CD8-positive, alpha-beta T cell (primary cell): ENCODE measurements at regions of chr1 and their contacts with region 1.

Region 1: GRCh38 chr1:248873409-248873992 is 14.6 kb upstream of the ZNF692 start:
- DNase-seq: peak; percentile 88 to 95 (median 92)
- ATAC-seq: peak; percentile 77
- H3K4me3 ChIP-seq: peak overlapping the region; percentile 78 to 87
- H3K4me3 Mint-ChIP-seq: peak overlapping the region; percentile 98
- H3K27ac ChIP-seq: peak overlapping the region; percentile 74 to 85
- H3K27ac Mint-ChIP-seq: peak overlapping the region; percentile 98
- H3K4me1 ChIP-seq: peaks cover 8% of the 10 kb centered on the region
- H3K4me1 Mint-ChIP-seq: peaks cover 24% of the 10 kb centered on the region
- H3K27me3 ChIP-seq: no peaks in the 10 kb centered on the region
- H3K27me3 Mint-ChIP-seq: no peaks in the 10 kb centered on the region
- CTCF ChIP-seq: no peak

Region 2: GRCh38 chr1:248807067-248807737 is 66.3 kb before region 1 on chr1:
- CTCF ChIA-PET with region 1: no interaction called
- POLR2A ChIA-PET with region 1: no interaction called
- intact Hi-C with region 1: no loop called
- DNase-seq: peak; percentile 18 to 65 (median 48)
- ATAC-seq: peak; percentile 87
- H3K4me3 ChIP-seq: no peak overlapping the region
- H3K4me3 Mint-ChIP-seq: no peak overlapping the region
- H3K27ac ChIP-seq: no peak overlapping the region
- H3K27ac Mint-ChIP-seq: no peak overlapping the region
- H3K4me1 ChIP-seq: peaks cover 3% of the 10 kb centered on the region
- H3K4me1 Mint-ChIP-seq: peaks cover 16% of the 10 kb centered on the region
- H3K27me3 ChIP-seq: peaks cover 0 to 2% of the 10 kb centered on the region in 2 experiments
- H3K27me3 Mint-ChIP-seq: peaks cover 7% of the 10 kb centered on the region
- CTCF ChIP-seq: peak; percentile 79

Region 3: DNA sequence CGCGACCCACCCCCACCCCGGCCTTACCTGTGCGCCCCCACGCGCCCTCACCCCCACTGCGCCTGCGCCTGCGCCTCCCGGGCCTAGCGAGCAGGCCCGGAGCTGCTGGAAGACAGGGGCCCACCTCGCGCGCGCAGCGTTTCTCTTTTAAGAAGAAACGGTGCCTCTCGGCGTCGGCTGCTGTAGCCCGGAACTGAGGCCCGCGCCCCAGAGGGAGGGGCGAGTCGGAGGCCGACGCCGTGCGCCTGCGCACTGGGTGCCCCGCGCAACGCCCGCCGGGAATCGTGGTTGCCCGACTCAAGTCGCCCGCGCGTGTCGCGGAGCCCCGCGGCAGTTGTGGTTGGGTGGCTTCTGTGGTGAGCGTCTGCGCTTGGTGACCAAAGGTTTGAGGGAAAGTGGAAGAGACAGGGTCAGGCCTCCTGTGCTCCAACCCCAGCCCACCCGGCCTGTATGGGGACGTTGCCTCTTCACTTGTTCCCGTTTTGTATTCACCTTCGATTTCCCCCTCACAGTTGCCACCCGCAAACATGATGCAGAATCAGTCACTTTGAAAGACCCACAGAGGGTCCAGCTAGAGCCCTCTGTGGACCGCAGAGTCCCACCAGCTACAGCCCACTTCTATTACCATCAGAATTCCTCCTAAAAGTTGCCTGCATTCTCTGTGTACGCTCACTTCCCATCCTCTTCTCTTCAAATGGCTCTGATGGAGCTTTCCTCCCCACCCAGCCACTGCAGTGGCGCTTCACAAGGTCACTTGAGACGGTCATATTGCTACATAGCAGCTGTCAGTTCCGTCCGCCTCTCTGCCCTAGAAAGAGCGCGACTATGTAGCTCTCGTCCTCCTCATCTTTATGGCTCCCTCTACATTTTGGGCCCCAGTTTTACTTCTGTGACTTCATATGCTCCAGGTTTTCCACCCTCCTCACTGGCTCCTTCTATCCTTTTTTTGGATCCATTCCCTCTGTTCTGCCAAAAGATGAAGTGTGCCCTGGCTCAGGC is 14.3 kb before region 1 on chr1 and contains the start of gene ZNF692:
- CTCF ChIA-PET with region 1: interaction called, 4 read pairs
- POLR2A ChIA-PET with region 1: interaction called, 55 read pairs
- intact Hi-C with region 1: loop called (anchors 1 kb)
- DNase-seq: peak; percentile 92 to 98 (median 96)
- ATAC-seq: peak; percentile 83
- H3K4me3 ChIP-seq: peak within 1 kb of the TSS; percentile 60 to 72
- H3K4me3 Mint-ChIP-seq: peak within 1 kb of the TSS; percentile 82
- H3K27ac ChIP-seq: peak within 1 kb of the TSS; percentile 75 to 82
- H3K27ac Mint-ChIP-seq: peak within 1 kb of the TSS; percentile 97
- H3K4me1 ChIP-seq: peaks cover 50% of the 10 kb centered on the region
- H3K4me1 Mint-ChIP-seq: peaks cover 54% of the 10 kb centered on the region
- H3K27me3 ChIP-seq: no peaks in the 10 kb centered on the region
- H3K27me3 Mint-ChIP-seq: no peaks in the 10 kb centered on the region
- CTCF ChIP-seq: no peak
- total RNA-seq, gene ZNF692: 18.7 to 19.2 TPM